ENCODE measurements at regions of chr17 and their contacts with region 1.

Region 1: DNA sequence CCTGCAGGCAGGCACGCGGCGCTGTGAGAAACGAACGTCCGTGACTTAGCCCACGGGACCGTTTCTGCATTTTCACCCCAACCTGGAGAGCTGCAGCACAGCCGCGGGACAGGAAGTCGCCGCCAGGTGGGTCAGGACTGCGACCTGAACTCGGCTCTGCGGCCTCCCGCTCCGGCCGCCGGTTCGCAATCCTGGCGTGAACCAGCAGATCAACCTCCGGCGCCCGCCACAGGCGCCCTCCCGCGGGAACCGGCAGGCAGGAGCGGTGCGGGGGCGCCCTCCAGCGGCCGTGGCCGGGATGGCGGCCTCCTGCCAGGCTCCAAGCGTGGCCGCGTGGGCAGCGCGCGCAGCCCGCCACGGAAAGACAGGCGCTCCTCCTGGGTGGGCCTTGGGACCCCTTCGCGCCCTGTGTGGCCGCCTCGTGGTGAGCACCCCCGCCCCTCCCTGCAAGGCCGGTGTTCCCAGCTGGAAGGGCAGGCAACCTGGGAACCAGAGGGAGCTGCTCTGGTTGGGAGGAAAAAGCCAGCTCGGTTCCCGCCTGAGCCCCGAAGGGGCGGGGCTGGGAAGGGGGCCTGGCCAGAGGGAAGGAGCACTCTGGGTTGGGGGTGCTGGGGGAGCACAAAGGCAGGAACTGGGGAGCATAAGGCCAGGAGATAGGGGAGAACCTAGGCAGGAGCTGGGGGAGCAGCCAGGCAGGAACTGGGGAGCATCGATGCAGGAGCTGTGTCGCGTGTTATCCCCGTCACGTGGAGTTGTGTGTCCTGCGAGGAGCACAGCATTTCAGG is 28.2 kb downstream of the ACTG1 start:
- DNase-seq: peak; percentile 76
- ATAC-seq: peak; percentile 73
- H3K4me3 ChIP-seq: peak overlapping the region in 2 of 3 experiments; percentile 44 to 62; a peak in 3 of 6 replicates
- H3K27ac ChIP-seq: no peak overlapping the region
- H3K4me1 ChIP-seq: peaks cover 62% of the 10 kb centered on the region
- H3K27me3 ChIP-seq: peaks cover 5 to 39% of the 10 kb centered on the region in 2 experiments; a peak in 4 of 5 replicates
- CTCF ChIP-seq: peak; percentile 95
- EP300 ChIP-seq: peak; percentile 46 to 67; a peak in 2 of 4 replicates
- POLR2A ChIP-seq: no peak
- RAD21 ChIP-seq: peak; percentile 100

Region 2: DNA sequence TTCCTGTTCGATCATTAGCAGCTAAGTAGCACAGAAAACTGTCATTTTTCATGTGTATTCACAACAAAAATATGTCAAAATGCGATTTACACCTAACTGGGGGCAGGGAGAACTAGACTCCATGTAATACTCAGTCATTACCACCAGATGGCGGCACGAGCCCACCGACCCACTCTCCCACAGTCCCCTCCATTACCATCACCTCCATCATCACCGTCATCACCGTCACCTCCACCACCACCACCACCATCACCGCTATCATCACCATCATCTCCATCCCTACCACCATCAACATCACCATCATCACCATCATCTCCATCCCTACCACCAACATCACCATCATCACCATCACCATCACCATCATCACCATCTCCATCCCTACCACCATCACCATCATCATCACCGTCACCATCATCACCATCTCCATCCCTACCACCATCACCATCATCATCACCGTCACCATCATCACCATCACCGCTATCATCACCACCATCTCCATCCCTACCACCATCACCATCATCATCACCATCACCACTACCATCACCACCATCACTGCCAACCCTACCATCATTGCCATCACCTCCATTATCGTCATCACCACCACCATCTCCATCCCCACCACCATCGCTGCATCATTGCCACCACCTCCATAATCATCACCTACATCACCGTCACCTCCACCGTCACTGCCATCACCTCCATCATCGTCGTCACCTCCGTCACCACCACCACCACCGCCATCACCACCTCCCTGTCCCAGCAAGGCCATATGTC is 230.8 kb before region 1 on chr17:
- CTCF ChIA-PET with region 1: interaction called, 17 read pairs
- POLR2A ChIA-PET with region 1: no interaction called
- in situ Hi-C with region 1: loop called (anchors 5 kb)
- intact Hi-C with region 1: loop called (anchors 1 kb)
- DNase-seq: no peak
- ATAC-seq: peak; percentile 41
- H3K4me3 ChIP-seq: no peak overlapping the region
- H3K27ac ChIP-seq: no peak overlapping the region
- H3K4me1 ChIP-seq: peaks cover 26% of the 10 kb centered on the region
- H3K27me3 ChIP-seq: no peaks in the 10 kb centered on the region
- CTCF ChIP-seq: peak; percentile 94
- EP300 ChIP-seq: no peak
- POLR2A ChIP-seq: no peak
- RAD21 ChIP-seq: peak; percentile 85

Region 3: GRCh38 chr17:81294856-81295680 is 189.3 kb before region 1 on chr17 and contains the start of gene SLC38A10:
- CTCF ChIA-PET with region 1: interaction called, 6 read pairs
- POLR2A ChIA-PET with region 1: interaction called, 5 read pairs
- in situ Hi-C with region 1: loop called (anchors 5 kb)
- intact Hi-C with region 1: loop called (anchors 5 kb)
- DNase-seq: peak; percentile 88
- ATAC-seq: peak; percentile 94
- H3K4me3 ChIP-seq: peak within 1 kb of the TSS; percentile 87 to 96 (median 90)
- H3K27ac ChIP-seq: peak within 1 kb of the TSS; percentile 86
- H3K4me1 ChIP-seq: peaks cover 49% of the 10 kb centered on the region
- H3K27me3 ChIP-seq: peaks cover 0 to 8% of the 10 kb centered on the region in 2 experiments; a peak in 2 of 5 replicates
- CTCF ChIP-seq: no peak; the same call in none of the 2 replicates
- EP300 ChIP-seq: no peak
- POLR2A ChIP-seq: peak; percentile 91 to 96
- RAD21 ChIP-seq: peak; percentile 8
- total RNA-seq, gene SLC38A10: 23.0 and 55.8 TPM in 2 replicates

Region 4: GRCh38 chr17:81302861-81303333 is 181.5 kb before region 1 on chr17:
- CTCF ChIA-PET with region 1: interaction called, 6 read pairs
- POLR2A ChIA-PET with region 1: no interaction called
- in situ Hi-C with region 1: loop called (anchors 5 kb)
- intact Hi-C with region 1: loop called (anchors 5 kb)
- DNase-seq: peak; percentile 61
- ATAC-seq: peak; percentile 67
- H3K4me3 ChIP-seq: peak overlapping the region in 1 of 3 experiments; percentile 43; a peak in 1 of 6 replicates
- H3K27ac ChIP-seq: no peak overlapping the region
- H3K4me1 ChIP-seq: peaks cover 78% of the 10 kb centered on the region
- H3K27me3 ChIP-seq: peaks cover 3 to 45% of the 10 kb centered on the region in 2 experiments; a peak in 4 of 5 replicates
- CTCF ChIP-seq: peak; percentile 84
- EP300 ChIP-seq: no peak
- POLR2A ChIP-seq: no peak
- RAD21 ChIP-seq: peak; percentile 20; the same call in 1 of the 2 replicates

Region 5: DNA sequence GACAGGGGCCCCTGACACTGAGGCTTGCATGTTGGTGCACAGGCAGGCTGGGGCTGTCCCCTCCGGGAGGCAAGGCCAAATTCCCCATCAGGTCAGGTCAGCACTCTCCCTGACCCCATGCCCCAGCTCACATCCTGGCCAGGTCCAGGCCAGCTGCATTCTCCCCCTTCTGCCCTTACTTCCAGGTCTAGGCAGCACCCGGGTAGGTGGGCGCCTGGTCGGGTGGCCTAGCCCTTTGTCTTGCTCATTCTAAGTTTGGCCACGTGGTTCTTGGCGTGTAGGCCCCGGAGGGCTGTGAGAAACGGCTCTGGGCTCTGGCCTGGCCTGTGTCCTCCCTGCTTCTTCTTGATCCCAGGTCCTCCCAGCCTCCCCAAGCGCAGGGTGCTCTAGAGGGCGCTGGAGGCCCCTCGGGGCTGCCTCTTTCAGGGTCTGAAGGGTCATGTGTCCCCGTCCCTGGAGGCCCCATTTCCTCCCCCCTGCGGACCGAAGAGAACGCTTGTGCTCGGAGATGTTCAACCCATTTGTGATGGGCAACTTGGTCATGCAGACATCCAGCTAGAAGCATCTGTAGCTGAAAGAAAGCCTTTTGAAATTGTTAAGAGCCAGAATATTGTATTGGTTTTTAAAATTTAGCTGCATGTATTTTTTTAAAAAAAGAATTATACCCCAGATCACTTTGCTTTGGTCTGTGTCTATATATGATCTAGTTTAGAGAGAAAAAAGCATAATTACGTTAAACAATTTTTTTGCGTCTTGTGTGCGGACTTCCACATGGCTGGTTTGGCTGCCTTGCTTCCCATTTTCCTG is 82.5 kb before region 1 on chr17:
- CTCF ChIA-PET with region 1: no interaction called
- POLR2A ChIA-PET with region 1: no interaction called
- in situ Hi-C with region 1: no loop called
- intact Hi-C with region 1: loop called (anchors 5 kb)
- DNase-seq: no peak
- ATAC-seq: peak; percentile 25
- H3K4me3 ChIP-seq: no peak overlapping the region
- H3K27ac ChIP-seq: no peak overlapping the region
- H3K4me1 ChIP-seq: peaks cover 48% of the 10 kb centered on the region
- H3K27me3 ChIP-seq: peaks cover 2 to 47% of the 10 kb centered on the region in 2 experiments; a peak in 4 of 5 replicates
- CTCF ChIP-seq: peak; percentile 64
- EP300 ChIP-seq: no peak
- POLR2A ChIP-seq: no peak
- RAD21 ChIP-seq: no peak

Region 6: GRCh38 chr17:81440876-81441244 is 43.5 kb before region 1 on chr17:
- CTCF ChIA-PET with region 1: interaction called, 8 read pairs
- POLR2A ChIA-PET with region 1: no interaction called
- in situ Hi-C with region 1: no loop called
- intact Hi-C with region 1: loop called (anchors 2 kb)
- DNase-seq: peak; percentile 67
- ATAC-seq: peak; percentile 86
- H3K4me3 ChIP-seq: no peak overlapping the region
- H3K27ac ChIP-seq: no peak overlapping the region
- H3K4me1 ChIP-seq: no peaks in the 10 kb centered on the region
- H3K27me3 ChIP-seq: no peaks in the 10 kb centered on the region
- CTCF ChIP-seq: peak; percentile 83
- EP300 ChIP-seq: no peak
- POLR2A ChIP-seq: no peak
- RAD21 ChIP-seq: peak; percentile 87

Measured in HepG2 (cell line).